B cell (primary cell): ENCODE measurements at regions of chr17 and their contacts with region 1.

Region 1: GRCh38 chr17:48413613-48414405 is 16.2 kb downstream of the SKAP1 start:
- DNase-seq: peak; percentile 62
- ATAC-seq: peak; percentile 82
- H3K4me3 ChIP-seq: peak overlapping the region in 1 of 5 experiments; percentile 3
- H3K4me3 Mint-ChIP-seq: peak overlapping the region; percentile 77
- H3K27ac ChIP-seq: peak overlapping the region; percentile 67 to 75
- H3K27ac Mint-ChIP-seq: peak overlapping the region; percentile 91
- H3K4me1 ChIP-seq: peaks cover 46 to 53% of the 10 kb centered on the region in 2 donors
- H3K4me1 Mint-ChIP-seq: peaks cover 57% of the 10 kb centered on the region
- H3K27me3 ChIP-seq: no peaks in the 10 kb centered on the region
- H3K27me3 Mint-ChIP-seq: peaks cover 4% of the 10 kb centered on the region
- CTCF ChIP-seq: no peak

Region 2: DNA sequence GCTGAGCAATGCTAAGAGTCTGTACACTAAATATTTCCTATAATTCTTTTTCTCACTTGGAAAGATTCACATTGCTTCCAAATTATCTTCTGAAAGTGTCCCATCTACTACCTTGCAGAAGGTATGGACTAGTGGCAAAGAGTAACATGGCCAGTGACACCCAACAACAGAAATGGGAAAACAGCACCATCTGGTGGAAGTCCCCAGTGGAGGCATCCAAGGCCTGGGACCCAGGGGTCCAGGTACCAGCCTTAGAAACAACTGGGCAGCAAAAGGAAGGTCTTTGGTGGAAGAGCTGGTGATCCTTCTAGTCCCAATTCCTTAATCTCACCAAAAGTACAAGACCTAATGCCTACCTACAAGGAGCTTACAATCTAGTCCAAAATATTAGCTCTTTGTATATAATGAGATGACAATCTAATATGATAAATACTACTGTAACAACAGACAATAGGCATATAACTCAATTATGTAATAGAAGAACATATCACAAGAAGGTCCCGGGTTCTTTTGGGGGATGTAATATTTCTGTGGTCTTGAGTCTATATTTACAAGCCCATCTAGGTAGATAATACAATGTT is 39.1 kb before region 1 on chr17:
- CTCF ChIA-PET with region 1: no interaction called
- POLR2A ChIA-PET with region 1: no interaction called
- intact Hi-C with region 1: loop called (anchors 5 kb)
- DNase-seq: peak; percentile 48
- ATAC-seq: peak; percentile 48
- H3K4me3 ChIP-seq: no peak overlapping the region
- H3K4me3 Mint-ChIP-seq: no peak overlapping the region
- H3K27ac ChIP-seq: peak overlapping the region in 1 of 2 donors; percentile 36
- H3K27ac Mint-ChIP-seq: peak overlapping the region; percentile 47
- H3K4me1 ChIP-seq: peaks cover 23% of the 10 kb centered on the region in 2 donors
- H3K4me1 Mint-ChIP-seq: peaks cover 24% of the 10 kb centered on the region
- H3K27me3 ChIP-seq: no peaks in the 10 kb centered on the region
- H3K27me3 Mint-ChIP-seq: no peaks in the 10 kb centered on the region
- CTCF ChIP-seq: peak; percentile 50

Region 3: DNA sequence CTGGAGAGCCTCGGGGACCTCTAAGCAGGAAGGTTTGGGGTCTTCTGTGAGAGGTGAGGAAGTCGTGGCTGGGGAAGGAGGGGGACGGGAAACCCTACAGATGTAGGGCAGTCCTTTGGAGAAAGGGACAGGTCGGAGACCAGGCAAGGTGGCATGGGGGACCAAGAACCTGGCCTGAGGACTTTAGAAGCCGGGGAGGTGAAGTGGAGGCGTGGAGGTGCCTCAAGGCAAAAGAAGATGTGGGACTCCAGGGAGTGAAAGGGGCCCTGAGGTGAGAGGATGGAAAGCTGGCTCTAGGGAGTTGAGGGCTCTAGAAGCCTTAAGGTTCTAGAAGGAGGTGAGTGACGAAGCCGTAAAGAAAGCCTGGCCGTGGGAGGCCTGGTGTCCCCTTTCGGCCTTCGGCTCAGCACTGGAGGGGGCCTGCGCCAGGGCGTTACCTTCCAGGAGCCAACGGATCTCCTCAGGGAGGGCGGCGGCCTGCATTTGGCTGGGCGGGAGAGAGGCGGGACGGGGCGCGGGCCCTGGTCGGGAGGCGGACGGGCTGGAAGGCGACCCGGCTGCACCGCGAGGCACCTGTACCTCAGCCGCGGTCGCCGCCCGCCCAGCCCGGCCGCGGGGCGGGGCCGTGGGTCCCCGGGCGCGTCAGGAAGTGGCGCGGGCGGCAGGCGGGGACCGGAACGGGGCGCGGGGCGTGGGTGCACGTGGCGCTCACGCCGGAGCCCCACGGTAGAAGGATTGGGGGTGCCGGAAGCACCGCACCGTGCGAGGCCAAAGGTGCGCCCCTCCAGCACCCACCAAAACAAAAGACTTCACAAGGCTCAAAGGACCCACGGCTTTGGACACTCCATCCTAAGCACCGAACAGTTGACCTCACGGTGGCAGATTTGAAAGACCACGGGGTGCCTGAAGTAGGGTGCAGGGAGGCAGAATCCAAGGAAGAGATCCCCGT is 16.1 kb after region 1 on chr17 and contains the start of gene SKAP1:
- CTCF ChIA-PET with region 1: interaction called, 3 read pairs
- POLR2A ChIA-PET with region 1: no interaction called
- intact Hi-C with region 1: loop called (anchors 2 kb)
- DNase-seq: peak; percentile 72
- ATAC-seq: peak; percentile 86
- H3K4me3 ChIP-seq: peak within 1 kb of the TSS; percentile 50 to 88 (median 77)
- H3K4me3 Mint-ChIP-seq: peak within 1 kb of the TSS; percentile 91
- H3K27ac ChIP-seq: peak within 1 kb of the TSS; percentile 80 to 81
- H3K27ac Mint-ChIP-seq: peak within 1 kb of the TSS; percentile 94
- H3K4me1 ChIP-seq: peaks cover 39 to 51% of the 10 kb centered on the region in 2 donors
- H3K4me1 Mint-ChIP-seq: peaks cover 57% of the 10 kb centered on the region
- H3K27me3 ChIP-seq: peaks cover 0 to 20% (median 7%) of the 10 kb centered on the region in 4 experiments
- H3K27me3 Mint-ChIP-seq: peaks cover 12% of the 10 kb centered on the region
- CTCF ChIP-seq: no peak
- total RNA-seq, gene SKAP1: 33.1 TPM in 2 replicates